ENCODE measurements at regions of chr9 and their contacts with region 1.

Region 1: DNA sequence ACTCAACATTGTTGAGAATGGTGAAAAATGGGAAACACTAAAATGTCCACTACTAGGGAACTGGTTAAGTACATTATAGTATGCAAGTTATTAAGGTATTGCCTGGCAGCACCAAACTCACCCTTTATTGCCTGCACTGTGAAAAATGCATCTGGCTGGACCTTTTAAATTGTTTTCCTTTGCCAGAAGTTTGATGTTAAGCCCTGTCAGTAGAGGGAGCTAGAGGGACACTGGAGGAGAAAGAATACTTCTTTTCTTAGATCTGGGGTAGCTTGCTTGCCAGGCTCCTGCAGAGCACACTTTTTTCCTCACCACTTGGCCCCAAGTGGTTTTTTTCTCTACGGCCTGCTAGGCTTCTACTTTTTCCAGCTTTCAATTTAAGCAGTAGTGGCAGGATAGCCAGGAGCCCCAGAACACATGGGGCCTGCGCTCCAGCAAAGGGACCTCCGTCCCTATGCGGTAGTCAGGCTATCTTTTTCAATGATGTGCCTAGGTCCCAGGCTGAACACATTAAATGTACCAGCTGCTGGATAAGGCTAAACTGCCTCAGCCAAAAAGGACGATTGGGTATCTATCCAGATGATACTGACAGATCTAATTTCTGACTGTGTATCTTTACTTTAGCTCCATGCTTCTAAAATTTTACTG is 8.0 kb upstream of the HABP4 start:
- DNase-seq: peak; percentile 27
- H3K4me3 Mint-ChIP-seq: no peak overlapping the region
- H3K27ac Mint-ChIP-seq: no peak overlapping the region
- H3K4me1 Mint-ChIP-seq: peaks cover 2% of the 10 kb centered on the region
- H3K27me3 Mint-ChIP-seq: no peaks in the 10 kb centered on the region

Region 2: GRCh38 chr9:96327694-96328352 is 114.1 kb before region 1 on chr9:
- CTCF ChIA-PET with region 1: interaction called, 7 read pairs
- intact Hi-C with region 1: loop called (anchors 5 kb)
- DNase-seq: peak; percentile 70
- H3K4me3 Mint-ChIP-seq: no peak overlapping the region
- H3K27ac Mint-ChIP-seq: no peak overlapping the region
- H3K4me1 Mint-ChIP-seq: no peaks in the 10 kb centered on the region
- H3K27me3 Mint-ChIP-seq: no peaks in the 10 kb centered on the region

Region 3: GRCh38 chr9:96663506-96664120 is 221.7 kb after region 1 on chr9:
- CTCF ChIA-PET with region 1: interaction called, 21 read pairs
- intact Hi-C with region 1: loop called (anchors 2 kb)
- DNase-seq: no peak
- H3K4me3 Mint-ChIP-seq: no peak overlapping the region
- H3K27ac Mint-ChIP-seq: no peak overlapping the region
- H3K4me1 Mint-ChIP-seq: no peaks in the 10 kb centered on the region
- H3K27me3 Mint-ChIP-seq: peaks cover 3% of the 10 kb centered on the region

Region 4: DNA sequence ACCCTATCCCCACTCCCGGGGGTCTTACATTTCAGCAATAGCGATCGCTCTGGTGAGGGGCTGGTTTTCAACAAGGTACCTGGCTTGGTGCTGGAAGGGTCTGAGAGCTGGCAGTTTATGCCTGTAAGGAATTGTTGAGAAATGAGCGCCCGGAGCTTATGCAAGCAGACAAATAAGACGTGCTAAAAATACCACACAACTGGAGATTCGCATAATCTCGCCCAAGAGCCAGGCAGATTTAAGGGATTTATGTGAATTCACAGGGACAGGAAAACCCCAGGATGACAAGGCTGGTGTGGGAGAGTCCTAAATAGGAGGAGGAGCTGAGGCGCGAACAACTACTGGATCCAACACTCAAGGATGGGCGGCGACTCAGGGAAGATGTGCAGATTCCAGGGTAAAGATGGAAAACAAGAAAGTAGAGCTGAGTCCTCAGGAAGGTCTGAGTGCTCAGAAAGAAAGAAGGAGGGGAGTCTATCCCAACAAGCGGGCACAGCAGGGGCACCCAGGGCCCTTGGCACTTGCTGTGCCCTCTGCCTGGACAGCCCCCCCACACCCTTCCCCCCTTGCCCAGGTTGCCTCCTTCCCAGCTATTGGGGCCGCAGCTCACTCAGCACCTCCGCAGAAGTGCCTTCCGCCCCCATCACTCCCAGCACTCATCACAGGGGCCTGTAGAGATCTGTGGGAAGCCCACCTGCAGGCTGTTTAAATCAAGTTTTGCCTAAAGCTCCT is 1650.1 kb after region 1 on chr9:
- CTCF ChIA-PET with region 1: no interaction called
- intact Hi-C with region 1: no loop called
- DNase-seq: no peak
- H3K4me3 Mint-ChIP-seq: peak overlapping the region; percentile 20
- H3K27ac Mint-ChIP-seq: peak overlapping the region; percentile 32
- H3K4me1 Mint-ChIP-seq: peaks cover 44% of the 10 kb centered on the region
- H3K27me3 Mint-ChIP-seq: no peaks in the 10 kb centered on the region